ENCODE measurements at regions of chr2 and their contacts with region 1.

Region 1: GRCh38 chr2:148020111-148021058 is at the start of gene ORC4:
- DNase-seq: peak; percentile 98 to 100
- H3K4me3 ChIP-seq: peak within 1 kb of the TSS; percentile 84
- H3K4me3 Mint-ChIP-seq: peak within 1 kb of the TSS; percentile 89
- H3K27ac Mint-ChIP-seq: peak within 1 kb of the TSS; percentile 85
- H3K4me1 ChIP-seq: peaks cover 6% of the 10 kb centered on the region; the same call in 1 of the 2 replicates
- H3K4me1 Mint-ChIP-seq: peaks cover 15% of the 10 kb centered on the region
- H3K27me3 ChIP-seq: no peaks in the 10 kb centered on the region
- H3K27me3 Mint-ChIP-seq: no peaks in the 10 kb centered on the region
- CTCF ChIP-seq: peak; percentile 38 to 73
- total RNA-seq, gene ORC4: 56.3 and 59.9 TPM in 2 replicates

Region 2: GRCh38 chr2:147844697-147845410 is 175.5 kb before region 1 on chr2 and contains the start of gene ACVR2A:
- CTCF ChIA-PET with region 1: no interaction called
- POLR2A ChIA-PET with region 1: interaction called, 14 read pairs
- intact Hi-C with region 1: no loop called
- DNase-seq: peak; percentile 49 to 59
- H3K4me3 ChIP-seq: peak within 1 kb of the TSS; percentile 56
- H3K4me3 Mint-ChIP-seq: peak within 1 kb of the TSS; percentile 99
- H3K27ac Mint-ChIP-seq: peak within 1 kb of the TSS; percentile 98
- H3K4me1 ChIP-seq: peaks cover 8% of the 10 kb centered on the region; the same call in 1 of the 2 replicates
- H3K4me1 Mint-ChIP-seq: peaks cover 22% of the 10 kb centered on the region
- H3K27me3 ChIP-seq: no peaks in the 10 kb centered on the region
- H3K27me3 Mint-ChIP-seq: no peaks in the 10 kb centered on the region
- CTCF ChIP-seq: no peak
- total RNA-seq, gene ACVR2A: 15.7 and 16.4 TPM in 2 replicates

Region 3: DNA sequence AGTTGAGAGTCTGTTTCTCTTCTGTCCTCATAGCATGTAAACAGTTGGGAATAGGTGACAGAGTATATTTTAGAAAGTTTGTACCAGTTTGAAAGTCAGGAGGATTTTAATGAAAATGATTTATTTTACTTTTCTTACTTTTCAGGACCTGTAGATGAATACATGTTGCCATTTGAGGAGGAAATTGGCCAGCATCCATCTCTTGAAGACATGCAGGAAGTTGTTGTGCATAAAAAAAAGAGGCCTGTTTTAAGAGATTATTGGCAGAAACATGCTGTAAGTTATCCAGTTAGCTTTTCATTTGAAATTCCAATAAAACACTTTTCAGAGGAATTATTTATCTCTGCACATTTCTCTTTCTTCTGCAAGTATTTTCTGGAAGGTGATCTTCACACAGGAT is 94.5 kb before region 1 on chr2:
- CTCF ChIA-PET with region 1: interaction called, 5 read pairs
- POLR2A ChIA-PET with region 1: interaction called, 6 read pairs
- intact Hi-C with region 1: loop called (anchors 5 kb)
- DNase-seq: no peak
- H3K4me3 ChIP-seq: no peak overlapping the region
- H3K4me3 Mint-ChIP-seq: peak overlapping the region; percentile 8
- H3K27ac Mint-ChIP-seq: peak overlapping the region; percentile 82
- H3K4me1 ChIP-seq: peaks cover 37% of the 10 kb centered on the region
- H3K4me1 Mint-ChIP-seq: peaks cover 16% of the 10 kb centered on the region
- H3K27me3 ChIP-seq: no peaks in the 10 kb centered on the region
- H3K27me3 Mint-ChIP-seq: no peaks in the 10 kb centered on the region
- CTCF ChIP-seq: no peak

Measured in Caco-2 (cell line).